ENCODE measurements at regions of chr17 and their contacts with region 1.

Region 1: GRCh38 chr17:34146440-34147043 is 108.5 kb upstream of the CCL2 start:
- DNase-seq: peak; percentile 72
- H3K4me3 Mint-ChIP-seq: no peak overlapping the region
- H3K27ac Mint-ChIP-seq: no peak overlapping the region
- H3K4me1 Mint-ChIP-seq: no peaks in the 10 kb centered on the region
- H3K27me3 Mint-ChIP-seq: peaks cover 5% of the 10 kb centered on the region

Region 2: DNA sequence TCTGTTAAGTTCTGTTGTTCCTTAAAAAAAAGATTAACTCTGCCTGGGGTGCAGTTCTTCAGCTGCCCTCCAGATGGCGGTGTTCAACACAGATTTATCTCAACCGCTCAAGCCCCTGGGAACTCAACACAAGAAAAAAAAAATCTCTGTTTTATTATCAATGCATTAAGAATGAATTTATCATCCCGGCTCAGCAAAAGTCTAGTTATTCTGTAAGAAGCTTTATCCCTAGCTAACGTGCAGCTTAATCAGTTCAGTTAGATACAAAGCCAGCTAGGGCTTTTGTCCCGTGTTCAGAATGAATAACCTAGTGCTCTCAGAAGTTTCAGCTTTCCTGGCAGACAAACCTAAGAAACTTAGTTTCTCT is 367.3 kb before region 1 on chr17:
- CTCF ChIA-PET with region 1: interaction called, 37 read pairs
- POLR2A ChIA-PET with region 1: no interaction called
- DNase-seq: peak; percentile 40
- H3K4me3 Mint-ChIP-seq: no peak overlapping the region
- H3K27ac Mint-ChIP-seq: no peak overlapping the region
- H3K4me1 Mint-ChIP-seq: no peaks in the 10 kb centered on the region
- H3K27me3 Mint-ChIP-seq: peaks cover 2% of the 10 kb centered on the region

Region 3: DNA sequence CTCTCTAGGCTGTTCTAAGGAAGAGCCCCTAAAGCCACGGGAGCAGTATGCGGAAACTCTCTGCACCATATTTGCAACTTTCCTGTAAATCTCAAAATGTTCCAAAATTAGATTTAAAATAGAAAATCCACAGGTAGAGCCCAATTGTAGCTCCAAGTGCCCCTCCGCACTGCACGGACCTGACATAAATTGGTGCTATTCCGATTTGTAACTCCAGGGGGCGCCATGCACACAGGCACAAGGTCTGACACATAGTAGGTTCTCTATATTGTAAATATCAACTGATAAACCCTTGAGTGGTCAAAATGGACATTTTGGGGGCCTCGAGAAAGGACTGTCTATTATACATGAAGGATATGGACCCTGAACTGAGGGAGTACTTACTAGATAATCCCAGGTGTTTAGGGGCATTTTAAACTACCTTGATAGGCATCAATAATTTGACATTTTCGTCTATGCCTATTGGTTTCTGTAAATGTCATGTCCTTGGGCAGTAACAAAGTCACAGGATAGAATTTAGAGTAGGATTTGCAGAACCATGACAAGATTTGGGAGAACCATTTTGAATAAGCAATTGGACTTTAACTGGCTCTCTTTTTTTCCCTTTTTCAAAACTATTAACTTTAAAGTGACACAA is 396.3 kb after region 1 on chr17:
- CTCF ChIA-PET with region 1: no interaction called
- POLR2A ChIA-PET with region 1: no interaction called
- DNase-seq: peak; percentile 52
- H3K4me3 Mint-ChIP-seq: no peak overlapping the region
- H3K27ac Mint-ChIP-seq: no peak overlapping the region
- H3K4me1 Mint-ChIP-seq: no peaks in the 10 kb centered on the region
- H3K27me3 Mint-ChIP-seq: peaks cover 30% of the 10 kb centered on the region